Heart left ventricle (tissue), 16 donors: ENCODE measurements at regions of chr13 and their contacts with region 1.

Region 1: GRCh38 chr13:48400850-48401291 is 12.0 kb downstream of the LPAR6 start:
- DNase-seq: no peak
- ATAC-seq: peak; percentile 66 to 90 (median 85)
- H3K4me3 ChIP-seq: peak overlapping the region in 7 of 12 donors; percentile 1 to 29 (median 10)
- H3K27ac ChIP-seq: peak overlapping the region; percentile 7 to 94 (median 72)
- H3K4me1 ChIP-seq: peaks cover 3 to 79% (median 42%) of the 10 kb centered on the region in 12 donors
- H3K27me3 ChIP-seq: no peaks in the 10 kb centered on the region
- CTCF ChIP-seq: peak in 5 of 12 donors; percentile 12 to 44 (median 26)
- POLR2A ChIP-seq: no peak

Region 2: GRCh38 chr13:48344264-48344663 is 56.6 kb before region 1 on chr13:
- intact Hi-C with region 1: loop called in 1 of 10 experiments (anchors 5 kb)
- DNase-seq: peak in 1 of 5 donors; percentile 36
- ATAC-seq: no peak
- H3K4me3 ChIP-seq: no peak overlapping the region
- H3K27ac ChIP-seq: no peak overlapping the region
- H3K4me1 ChIP-seq: no peaks in the 10 kb centered on the region
- H3K27me3 ChIP-seq: no peaks in the 10 kb centered on the region
- CTCF ChIP-seq: no peak
- POLR2A ChIP-seq: no peak

Region 3: DNA sequence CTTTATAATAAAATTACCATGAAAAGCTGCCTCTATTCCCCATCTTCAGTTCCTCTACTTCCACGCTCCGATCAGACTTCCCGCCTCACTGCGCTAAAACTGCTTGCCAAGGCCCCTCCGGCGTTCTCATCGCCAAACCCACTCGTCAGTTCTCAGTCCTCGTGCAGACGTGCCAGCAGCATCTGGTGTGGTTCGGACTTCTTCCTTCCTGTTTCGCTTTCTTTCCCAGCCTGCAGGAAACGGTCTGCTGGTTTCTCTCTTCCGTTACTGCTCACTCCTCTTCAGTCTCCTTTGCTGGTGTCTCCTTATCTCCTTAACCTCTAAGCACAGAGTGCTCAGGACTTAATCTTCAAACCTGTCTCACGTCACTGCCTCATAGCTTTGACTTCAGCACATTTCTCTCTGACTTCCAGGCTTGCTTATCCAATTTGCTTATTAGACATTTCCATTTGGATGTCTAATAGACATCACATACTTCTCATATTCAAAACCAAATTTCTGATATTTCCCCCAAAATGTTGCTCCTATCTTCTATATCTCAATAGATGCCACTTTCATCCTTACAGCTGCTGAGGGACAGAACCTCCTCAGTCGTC is 91.7 kb after region 1 on chr13:
- intact Hi-C with region 1: loop called in 2 of 10 experiments (anchors 10 kb)
- DNase-seq: peak; percentile 86 to 90 (median 88)
- ATAC-seq: peak; percentile 89 to 95 (median 92)
- H3K4me3 ChIP-seq: peak overlapping the region in 10 of 12 donors; percentile 21 to 55 (median 43)
- H3K27ac ChIP-seq: peak overlapping the region; percentile 55 to 93 (median 76)
- H3K4me1 ChIP-seq: peaks cover 0 to 80% (median 24%) of the 10 kb centered on the region in 12 donors
- H3K27me3 ChIP-seq: no peaks in the 10 kb centered on the region
- CTCF ChIP-seq: no peak
- POLR2A ChIP-seq: no peak

Region 4: DNA sequence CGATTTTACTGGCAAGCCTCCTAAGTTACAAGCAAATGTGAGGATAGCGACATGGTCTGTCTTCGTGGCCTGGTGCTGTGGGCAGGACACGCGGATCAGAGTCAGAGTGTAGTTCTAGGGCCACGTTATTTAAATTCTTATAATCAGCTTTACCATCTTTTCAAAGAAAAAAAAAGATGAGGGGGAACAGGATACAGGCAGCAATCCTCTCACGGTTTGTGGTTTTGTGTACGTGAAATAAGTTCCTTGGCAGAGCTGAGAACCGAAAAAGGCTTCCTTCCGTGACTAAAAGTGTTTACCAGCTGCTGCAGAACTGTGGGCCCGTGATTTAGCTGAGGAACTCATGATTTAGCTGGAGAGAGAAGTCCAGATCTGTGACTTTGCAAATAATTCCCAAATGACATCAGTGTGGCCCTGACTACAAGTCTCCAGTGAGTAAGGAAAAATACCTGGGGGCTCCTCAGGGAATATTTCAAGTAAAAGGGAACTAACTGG is 104.8 kb after region 1 on chr13:
- intact Hi-C with region 1: loop called in 1 of 10 experiments (anchors 5 kb)
- DNase-seq: peak in 4 of 5 donors; percentile 47 to 70 (median 62)
- ATAC-seq: peak; percentile 69 to 84 (median 72)
- H3K4me3 ChIP-seq: peak overlapping the region in 7 of 12 donors; percentile 1 to 30 (median 23)
- H3K27ac ChIP-seq: peak overlapping the region; percentile 62 to 96 (median 82)
- H3K4me1 ChIP-seq: peaks cover 0 to 79% (median 29%) of the 10 kb centered on the region in 12 donors
- H3K27me3 ChIP-seq: no peaks in the 10 kb centered on the region
- CTCF ChIP-seq: no peak
- POLR2A ChIP-seq: no peak

Region 5: GRCh38 chr13:48526286-48526685 is 125.4 kb after region 1 on chr13:
- intact Hi-C with region 1: loop called in 2 of 10 experiments (anchors 5 kb)
- DNase-seq: no peak
- ATAC-seq: peak in 1 of 4 donors; percentile 18
- H3K4me3 ChIP-seq: no peak overlapping the region
- H3K27ac ChIP-seq: no peak overlapping the region
- H3K4me1 ChIP-seq: peaks cover 0 to 57% (median 20%) of the 10 kb centered on the region in 12 donors
- H3K27me3 ChIP-seq: no peaks in the 10 kb centered on the region
- CTCF ChIP-seq: no peak
- POLR2A ChIP-seq: no peak

Region 6: DNA sequence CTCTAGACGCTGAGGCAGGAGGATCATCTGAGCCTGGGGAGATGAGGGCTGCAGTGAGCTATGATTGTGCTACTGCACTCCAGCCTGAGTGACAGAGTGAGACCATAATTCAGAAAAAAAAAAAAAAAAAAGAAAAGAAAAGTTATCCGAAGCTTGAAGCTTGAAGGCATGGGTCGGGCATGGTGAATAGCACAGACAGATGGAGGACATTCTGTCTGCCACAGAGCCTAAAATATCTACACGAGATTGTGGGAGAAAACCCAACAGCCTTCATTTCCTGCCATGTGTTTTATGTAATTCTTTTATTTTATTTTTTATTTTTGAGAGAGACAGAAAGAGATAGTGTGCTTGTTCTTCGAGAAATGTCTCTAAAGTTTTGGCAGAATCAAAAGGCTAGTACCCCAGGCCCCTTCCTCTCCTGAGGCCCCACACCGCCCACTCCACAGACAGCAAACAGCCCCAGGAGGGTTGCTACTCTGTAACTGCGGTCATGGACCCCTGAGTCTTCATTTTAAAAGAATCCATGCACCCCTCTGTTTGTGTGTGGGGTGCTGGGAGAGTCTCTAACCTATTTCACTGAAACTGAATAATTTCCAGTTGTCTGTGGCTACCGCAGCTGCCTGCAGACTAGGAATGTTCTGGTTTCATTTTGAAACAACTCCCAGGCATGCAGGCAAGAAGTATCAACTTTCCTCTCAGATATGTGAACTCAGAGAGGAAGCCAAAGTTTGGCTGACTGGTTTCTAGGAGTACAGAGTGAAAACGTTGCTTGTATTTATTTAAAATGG is 170.4 kb after region 1 on chr13:
- intact Hi-C with region 1: loop called in 7 of 10 experiments (anchors 5 to 10 kb)
- DNase-seq: peak in 1 of 5 donors; percentile 51
- ATAC-seq: peak; percentile 39 to 76 (median 57)
- H3K4me3 ChIP-seq: peak overlapping the region in 8 of 12 donors; percentile 11 to 42 (median 28)
- H3K27ac ChIP-seq: peak overlapping the region; percentile 72 to 90 (median 82)
- H3K4me1 ChIP-seq: peaks cover 3 to 95% (median 55%) of the 10 kb centered on the region in 12 donors
- H3K27me3 ChIP-seq: no peaks in the 10 kb centered on the region
- CTCF ChIP-seq: no peak
- POLR2A ChIP-seq: no peak